Testis (tissue), 5 donors: ENCODE measurements at regions of chr1 and their contacts with region 1.

Region 1: DNA sequence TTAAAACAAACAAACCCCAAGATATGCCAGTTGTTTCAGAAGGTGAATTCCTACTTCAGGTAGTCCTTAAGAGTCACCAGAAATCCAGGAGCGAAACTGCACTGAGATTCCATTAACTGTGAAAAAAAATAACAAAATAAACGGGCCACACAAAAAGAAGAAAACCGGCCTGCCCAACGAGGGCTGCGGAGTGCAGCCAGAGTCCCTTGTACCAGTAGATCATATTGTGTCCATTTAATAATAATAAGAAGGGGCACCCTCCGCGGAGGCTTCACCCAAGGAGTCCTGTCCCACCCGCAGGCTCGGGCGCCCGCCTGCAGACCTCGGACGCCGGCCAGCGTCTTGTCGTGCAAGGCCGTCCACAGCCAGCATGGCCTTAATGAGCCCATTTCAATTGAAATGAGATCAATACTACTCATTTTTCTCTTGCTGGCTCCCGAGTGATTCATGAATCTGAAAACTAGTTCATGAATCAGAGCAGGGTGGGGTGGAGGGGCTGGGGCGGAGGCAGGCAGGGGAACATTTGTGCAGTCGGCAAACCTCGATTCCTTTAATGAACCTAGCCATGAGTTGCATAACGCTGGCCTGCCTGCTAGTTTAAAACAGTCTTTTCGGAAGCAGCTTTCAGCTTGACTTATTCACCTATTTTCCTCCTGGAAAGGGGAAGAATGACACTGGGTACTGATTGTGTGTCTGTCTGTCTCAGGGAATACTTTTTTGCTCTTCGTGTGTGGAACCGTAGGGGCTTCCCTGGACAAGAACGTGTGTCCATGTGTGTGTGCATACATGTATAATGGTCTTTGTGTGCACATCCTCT is 113.1 kb upstream of the IRF2BP2 start:
- DNase-seq: peak; percentile 67
- H3K4me3 ChIP-seq: peak overlapping the region; percentile 4 to 13
- H3K27ac ChIP-seq: peak overlapping the region; percentile 89 to 96
- H3K4me1 ChIP-seq: peaks cover 94% of the 10 kb centered on the region
- H3K27me3 ChIP-seq: no peaks in the 10 kb centered on the region
- CTCF ChIP-seq: no peak
- POLR2A ChIP-seq: no peak

Region 2: DNA sequence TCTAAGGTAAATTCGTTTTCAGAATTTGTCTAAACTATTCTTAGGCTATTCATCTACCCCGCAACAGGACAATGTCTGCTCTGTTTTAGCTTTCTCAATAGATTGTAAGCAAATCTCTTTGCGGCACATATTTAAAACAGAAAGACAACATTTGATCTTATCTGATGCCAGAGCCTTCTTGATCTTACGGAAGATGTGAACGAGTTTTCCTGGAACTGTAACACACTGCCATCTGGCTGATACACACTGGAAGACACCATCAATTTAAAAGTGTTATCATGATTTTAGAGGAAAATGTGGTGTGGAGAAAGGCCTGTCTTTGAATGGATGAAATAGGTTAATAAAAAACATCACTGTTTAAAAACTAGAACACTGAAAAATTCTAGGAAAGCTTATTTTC is 313.8 kb before region 1 on chr1:
- intact Hi-C with region 1: no loop called
- DNase-seq: no peak
- H3K4me3 ChIP-seq: no peak overlapping the region
- H3K27ac ChIP-seq: no peak overlapping the region
- H3K4me1 ChIP-seq: no peaks in the 10 kb centered on the region
- H3K27me3 ChIP-seq: no peaks in the 10 kb centered on the region
- CTCF ChIP-seq: no peak
- POLR2A ChIP-seq: no peak

Region 3: GRCh38 chr1:234533975-234534876 is 188.9 kb before region 1 on chr1:
- intact Hi-C with region 1: loop called (anchors 5 kb)
- DNase-seq: peak; percentile 99
- H3K4me3 ChIP-seq: no peak overlapping the region
- H3K27ac ChIP-seq: peak overlapping the region; percentile 95 to 98
- H3K4me1 ChIP-seq: peaks cover 71% of the 10 kb centered on the region
- H3K27me3 ChIP-seq: no peaks in the 10 kb centered on the region
- CTCF ChIP-seq: no peak
- POLR2A ChIP-seq: no peak

Region 4: GRCh38 chr1:234978397-234979295 is 255.5 kb after region 1 on chr1:
- intact Hi-C with region 1: loop called (anchors 10 kb)
- DNase-seq: peak; percentile 74
- H3K4me3 ChIP-seq: no peak overlapping the region
- H3K27ac ChIP-seq: peak overlapping the region; percentile 64 to 90
- H3K4me1 ChIP-seq: peaks cover 41% of the 10 kb centered on the region
- H3K27me3 ChIP-seq: no peaks in the 10 kb centered on the region
- CTCF ChIP-seq: no peak
- POLR2A ChIP-seq: no peak

Region 5: DNA sequence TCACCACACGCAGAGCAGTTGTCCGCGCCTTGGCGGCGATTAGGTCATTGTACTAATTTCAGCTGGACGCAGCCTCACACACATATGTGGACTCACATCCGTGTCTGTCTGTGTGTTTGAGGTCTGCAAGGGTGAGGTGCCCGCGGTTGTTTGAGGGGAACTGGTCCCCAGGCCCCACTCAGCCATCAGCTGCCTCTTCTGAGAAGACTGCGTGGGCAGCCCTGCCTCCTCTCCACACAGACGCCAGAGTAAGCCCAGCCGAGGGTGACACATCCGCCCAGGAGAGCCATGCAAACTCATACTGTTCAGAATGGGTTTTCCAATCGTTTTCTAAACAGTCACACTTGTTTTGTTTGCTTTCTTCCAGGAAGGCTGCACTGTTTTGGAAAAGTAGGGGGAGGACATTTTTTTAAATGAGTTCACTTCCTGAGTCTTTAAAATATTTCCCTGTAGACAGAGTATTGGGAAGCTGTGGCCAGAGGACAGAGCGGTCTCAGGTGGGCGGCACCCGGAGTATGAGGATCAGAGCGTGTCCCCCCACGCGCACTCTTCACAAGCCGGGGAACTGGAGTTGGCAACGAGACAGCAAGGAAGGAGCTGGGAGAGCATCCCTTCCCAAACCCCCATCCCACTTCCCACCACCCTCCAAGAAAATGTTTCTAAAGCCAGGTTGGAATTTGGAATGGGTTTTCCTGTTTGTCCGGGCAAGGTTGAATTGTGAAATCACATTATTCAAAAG is 352.2 kb after region 1 on chr1:
- intact Hi-C with region 1: loop called (anchors 5 kb)
- DNase-seq: no peak
- H3K4me3 ChIP-seq: no peak overlapping the region
- H3K27ac ChIP-seq: peak overlapping the region; percentile 44 to 50
- H3K4me1 ChIP-seq: peaks cover 34% of the 10 kb centered on the region
- H3K27me3 ChIP-seq: no peaks in the 10 kb centered on the region
- CTCF ChIP-seq: no peak
- POLR2A ChIP-seq: no peak